ENCODE measurements at regions of chr12 and their contacts with region 1.

Region 1: DNA sequence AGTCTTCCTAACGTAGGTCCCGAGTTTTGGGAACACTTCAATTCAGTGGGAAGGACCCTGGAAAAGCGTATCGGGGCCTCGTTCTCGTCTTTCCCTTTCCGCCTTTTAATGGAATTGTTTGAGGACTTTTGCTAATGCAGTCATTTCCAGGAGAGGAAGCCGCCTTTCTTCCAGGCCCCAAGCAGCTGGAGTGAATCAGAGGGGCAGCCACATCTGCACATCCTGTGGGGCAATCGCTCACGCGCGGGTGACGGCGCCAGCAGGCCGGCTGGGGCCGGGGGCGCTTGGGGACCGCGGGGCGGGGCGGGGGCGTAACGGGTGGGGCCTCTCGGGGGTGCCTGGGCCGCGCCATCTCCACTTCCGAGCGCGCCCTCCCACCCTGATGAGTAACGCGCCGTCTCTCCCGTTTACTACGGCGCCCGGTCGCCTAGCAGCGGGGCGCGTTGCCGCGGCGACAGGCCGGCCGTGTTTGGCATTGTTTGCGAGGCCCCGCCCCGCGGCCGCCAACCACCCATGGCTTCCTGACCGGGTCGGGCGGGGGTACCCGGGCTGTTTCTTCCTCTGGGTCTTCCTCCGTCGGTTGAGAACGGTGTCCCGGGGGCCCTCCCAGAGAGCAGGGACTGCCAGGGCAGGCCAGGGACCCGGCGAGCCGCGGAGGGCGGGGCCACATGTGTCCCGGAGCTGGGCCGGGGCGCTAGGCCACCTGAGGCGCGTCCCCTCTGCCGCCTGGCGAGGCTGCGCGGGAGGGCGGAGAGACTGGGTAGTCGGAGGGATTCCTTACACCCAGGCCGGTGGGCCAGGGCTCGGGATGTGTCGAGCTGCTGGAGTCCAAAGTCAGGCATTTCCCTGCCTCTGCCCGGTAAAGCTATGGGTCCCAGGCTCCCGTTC is 2.3 kb downstream of the GSG1 start:
- DNase-seq: peak; percentile 95
- H3K4me3 ChIP-seq: peak overlapping the region in 2 of 3 experiments; percentile 36 to 47
- H3K27ac ChIP-seq: peak overlapping the region; percentile 100
- H3K4me1 ChIP-seq: peaks cover 46% of the 10 kb centered on the region
- H3K27me3 ChIP-seq: no peaks in the 10 kb centered on the region
- CTCF ChIP-seq: no peak
- POLR2A ChIP-seq: no peak

Region 2: GRCh38 chr12:12724661-12725545 is 376.2 kb before region 1 on chr12:
- CTCF ChIA-PET with region 1: no interaction called
- POLR2A ChIA-PET with region 1: no interaction called
- dilution Hi-C with region 1: no loop called
- intact Hi-C with region 1: loop called (anchors 5 kb)
- DNase-seq: peak; percentile 98
- H3K4me3 ChIP-seq: peak overlapping the region; percentile 13 to 97 (median 95)
- H3K27ac ChIP-seq: peak overlapping the region; percentile 98
- H3K4me1 ChIP-seq: peaks cover 38% of the 10 kb centered on the region
- H3K27me3 ChIP-seq: no peaks in the 10 kb centered on the region
- CTCF ChIP-seq: no peak
- POLR2A ChIP-seq: peak; percentile 75

Region 3: DNA sequence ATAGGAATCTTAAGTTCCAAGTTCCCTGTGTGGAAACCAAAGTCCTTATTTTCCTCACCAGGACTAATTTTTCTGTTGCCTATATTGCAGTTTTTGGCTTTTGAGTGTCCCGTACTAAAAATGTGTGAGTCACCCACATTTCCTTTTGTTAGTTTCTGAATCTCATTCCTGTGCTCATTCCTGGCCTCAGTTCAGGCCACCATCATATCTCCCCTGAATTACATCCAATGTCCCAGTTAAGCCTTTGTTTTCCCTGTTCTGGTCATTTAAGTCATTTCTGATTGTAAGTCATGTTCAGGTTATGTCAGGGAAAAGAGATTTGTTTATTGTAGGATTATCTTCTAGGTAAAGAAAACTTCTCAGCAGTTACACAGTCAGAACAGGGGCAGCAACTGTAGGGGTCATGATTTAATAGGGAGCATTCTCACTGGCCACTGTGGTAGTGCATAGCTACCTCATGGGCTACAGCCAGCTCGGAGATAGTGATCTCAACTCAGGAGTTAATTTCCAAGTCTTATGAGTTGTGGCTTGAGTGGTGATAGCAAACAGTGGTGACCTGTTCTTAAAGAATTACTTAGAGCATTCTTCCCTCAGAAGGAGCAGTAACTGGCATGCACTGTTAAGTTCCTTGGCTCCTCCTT is 281.3 kb before region 1 on chr12:
- CTCF ChIA-PET with region 1: no interaction called
- POLR2A ChIA-PET with region 1: no interaction called
- dilution Hi-C with region 1: no loop called
- intact Hi-C with region 1: loop called (anchors 5 kb)
- DNase-seq: peak; percentile 85
- H3K4me3 ChIP-seq: peak overlapping the region in 1 of 3 experiments; percentile 15
- H3K27ac ChIP-seq: peak overlapping the region; percentile 93
- H3K4me1 ChIP-seq: peaks cover 49% of the 10 kb centered on the region
- H3K27me3 ChIP-seq: no peaks in the 10 kb centered on the region
- CTCF ChIP-seq: no peak
- POLR2A ChIP-seq: no peak

Region 4: GRCh38 chr12:13044002-13044905 is 56.9 kb before region 1 on chr12 and contains the start of gene FAM234B:
- CTCF ChIA-PET with region 1: interaction called, 5 read pairs
- POLR2A ChIA-PET with region 1: no interaction called
- dilution Hi-C with region 1: no loop called
- intact Hi-C with region 1: loop called (anchors 2 kb)
- DNase-seq: peak; percentile 70
- H3K4me3 ChIP-seq: peak within 1 kb of the TSS; percentile 66 to 85 (median 79)
- H3K27ac ChIP-seq: no peak within 1 kb of the TSS
- H3K4me1 ChIP-seq: peaks cover 10% of the 10 kb centered on the region
- H3K27me3 ChIP-seq: peaks cover 2% of the 10 kb centered on the region in 2 experiments
- CTCF ChIP-seq: peak; percentile 9 to 21
- POLR2A ChIP-seq: no peak
- total RNA-seq, gene FAM234B: 9.4 and 13.2 TPM in 2 replicates

Region 5: GRCh38 chr12:13114251-13115052 is 13.3 kb after region 1 on chr12:
- CTCF ChIA-PET with region 1: interaction called, 18 read pairs
- POLR2A ChIA-PET with region 1: no interaction called
- dilution Hi-C with region 1: no loop called
- intact Hi-C with region 1: loop called (anchors 1 kb)
- DNase-seq: no peak
- H3K4me3 ChIP-seq: no peak overlapping the region
- H3K27ac ChIP-seq: no peak overlapping the region
- H3K4me1 ChIP-seq: peaks cover 25% of the 10 kb centered on the region
- H3K27me3 ChIP-seq: no peaks in the 10 kb centered on the region
- CTCF ChIP-seq: no peak
- POLR2A ChIP-seq: no peak

Region 6: GRCh38 chr12:13135371-13136178 is 34.4 kb after region 1 on chr12:
- CTCF ChIA-PET with region 1: interaction called, 4 read pairs
- POLR2A ChIA-PET with region 1: no interaction called
- dilution Hi-C with region 1: no loop called
- intact Hi-C with region 1: loop called (anchors 1 kb)
- DNase-seq: peak; percentile 46
- H3K4me3 ChIP-seq: no peak overlapping the region
- H3K27ac ChIP-seq: peak overlapping the region; percentile 30
- H3K4me1 ChIP-seq: peaks cover 20% of the 10 kb centered on the region
- H3K27me3 ChIP-seq: no peaks in the 10 kb centered on the region
- CTCF ChIP-seq: peak in 1 of 2 donors; percentile 17
- POLR2A ChIP-seq: no peak

Region 7: DNA sequence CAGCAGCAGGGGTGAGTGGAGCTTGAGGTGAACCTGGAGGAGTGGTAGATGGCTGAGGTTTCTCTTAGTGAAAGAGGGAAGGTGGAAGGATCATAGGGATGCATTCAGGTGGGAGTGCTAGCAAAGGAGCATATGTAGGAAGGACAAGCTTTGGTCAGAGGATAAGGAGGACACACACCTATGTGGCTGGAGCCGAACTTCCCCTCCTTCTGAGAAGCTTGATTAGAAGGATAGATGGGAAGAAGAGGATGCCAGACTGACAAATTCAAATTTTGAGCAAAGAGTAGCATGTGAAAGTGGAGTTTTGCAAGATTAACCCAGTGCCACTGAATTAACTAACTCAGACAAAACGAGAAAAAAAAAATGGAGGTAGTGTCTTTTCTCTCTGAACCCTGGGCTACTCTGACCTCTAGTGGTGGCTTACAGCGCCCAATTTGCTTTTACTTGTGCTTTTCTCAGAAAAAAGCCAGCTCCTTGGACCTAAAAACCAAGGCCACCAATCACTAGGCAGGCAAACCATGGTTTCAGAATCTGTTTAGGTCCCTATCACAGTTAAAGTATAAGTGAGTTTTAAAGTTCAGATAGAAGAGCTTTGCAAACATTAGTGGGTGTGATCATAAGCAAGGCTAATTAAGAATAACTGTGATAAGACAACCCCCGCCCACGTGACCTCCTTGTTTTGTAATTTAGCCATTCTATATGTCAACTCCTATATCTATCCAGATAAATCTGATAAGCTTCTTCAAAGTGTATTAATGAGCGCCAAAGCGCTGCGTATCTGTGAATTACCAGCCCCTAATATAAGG is 110.9 kb after region 1 on chr12:
- CTCF ChIA-PET with region 1: interaction called, 89 read pairs
- POLR2A ChIA-PET with region 1: interaction called, 5 read pairs
- dilution Hi-C with region 1: no loop called
- intact Hi-C with region 1: no loop called
- DNase-seq: peak; percentile 70
- H3K4me3 ChIP-seq: no peak overlapping the region
- H3K27ac ChIP-seq: peak overlapping the region; percentile 54
- H3K4me1 ChIP-seq: peaks cover 49% of the 10 kb centered on the region
- H3K27me3 ChIP-seq: no peaks in the 10 kb centered on the region
- CTCF ChIP-seq: peak; percentile 72 to 76
- POLR2A ChIP-seq: no peak

Region 8: GRCh38 chr12:13727707-13728195 is 626.6 kb after region 1 on chr12:
- CTCF ChIA-PET with region 1: no interaction called
- POLR2A ChIA-PET with region 1: no interaction called
- dilution Hi-C with region 1: no loop called
- intact Hi-C with region 1: no loop called
- DNase-seq: no peak
- H3K4me3 ChIP-seq: no peak overlapping the region
- H3K27ac ChIP-seq: no peak overlapping the region
- H3K4me1 ChIP-seq: no peaks in the 10 kb centered on the region
- H3K27me3 ChIP-seq: no peaks in the 10 kb centered on the region
- CTCF ChIP-seq: no peak
- POLR2A ChIP-seq: no peak